ENCODE measurements at regions of chr11 and their contacts with region 1.

Region 1: DNA sequence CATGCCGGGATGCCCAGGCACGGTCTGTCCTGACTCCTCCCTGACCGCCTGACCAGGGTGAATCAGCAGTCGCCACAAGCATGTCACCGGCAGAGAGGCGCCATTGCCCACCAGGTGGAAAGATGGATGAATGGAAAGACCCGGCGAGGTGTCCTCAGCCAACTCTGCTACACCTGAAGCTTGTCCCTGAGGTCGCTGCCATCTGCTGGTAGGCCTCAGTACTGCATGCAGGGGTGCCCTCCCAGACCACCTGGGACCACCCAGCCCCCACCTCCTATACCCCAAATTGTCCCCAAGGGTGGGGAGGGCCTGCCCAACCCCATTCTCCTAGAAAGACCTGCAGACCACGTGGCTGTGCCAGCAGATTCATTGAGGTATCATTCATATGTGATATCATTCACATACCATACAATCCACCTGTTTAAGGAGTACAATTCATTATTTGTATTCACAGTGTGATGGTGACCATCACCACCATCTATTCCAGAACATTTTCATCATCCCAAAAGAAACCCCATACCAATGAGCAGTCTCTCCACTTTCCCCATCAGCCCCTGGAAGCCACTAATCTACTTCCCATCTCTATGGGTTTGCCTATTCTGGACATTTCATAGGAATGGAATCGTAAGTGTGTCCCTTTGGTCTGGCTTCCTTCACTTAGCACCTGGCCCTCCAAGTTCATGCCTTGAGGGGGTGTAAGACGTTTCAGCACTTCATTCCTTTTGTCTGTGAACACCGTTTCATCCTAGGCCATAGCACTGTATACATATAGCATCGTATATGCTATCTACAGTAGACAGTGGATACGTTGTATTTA is 17.5 kb downstream of the FGF3 start:
- DNase-seq: no peak
- H3K4me3 ChIP-seq: no peak overlapping the region
- H3K4me3 Mint-ChIP-seq: no peak overlapping the region
- H3K27ac ChIP-seq: no peak overlapping the region
- H3K27ac Mint-ChIP-seq: no peak overlapping the region
- H3K4me1 ChIP-seq: no peaks in the 10 kb centered on the region
- H3K4me1 Mint-ChIP-seq: no peaks in the 10 kb centered on the region
- H3K27me3 ChIP-seq: no peaks in the 10 kb centered on the region
- H3K27me3 Mint-ChIP-seq: peaks cover 2 to 3% (median 2%) of the 10 kb centered on the region in 3 donors
- CTCF ChIP-seq: peak; percentile 73

Region 2: DNA sequence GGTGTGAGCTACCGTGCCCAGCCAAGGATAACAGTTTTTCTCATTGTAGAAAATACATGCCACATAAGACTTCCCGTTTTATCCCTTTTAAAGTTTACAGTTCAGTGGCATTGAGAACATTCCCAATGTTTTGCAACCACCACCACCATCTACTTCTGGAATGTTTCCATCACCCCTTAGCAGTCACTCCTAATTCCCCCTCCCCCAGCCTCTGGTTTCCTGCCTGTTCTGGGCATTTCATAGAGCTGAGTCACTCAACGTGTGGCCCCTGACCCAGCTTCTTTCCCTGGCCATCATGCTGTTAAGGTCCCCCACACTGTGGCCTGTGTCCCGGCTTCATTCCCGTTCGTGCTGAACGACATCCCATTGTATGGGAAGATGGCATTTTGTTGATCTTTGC is 57.3 kb before region 1 on chr11:
- intact Hi-C with region 1: loop called in 1 of 2 experiments (anchors 10 kb)
- DNase-seq: no peak
- H3K4me3 ChIP-seq: no peak overlapping the region
- H3K4me3 Mint-ChIP-seq: no peak overlapping the region
- H3K27ac ChIP-seq: no peak overlapping the region
- H3K27ac Mint-ChIP-seq: no peak overlapping the region
- H3K4me1 ChIP-seq: no peaks in the 10 kb centered on the region
- H3K4me1 Mint-ChIP-seq: no peaks in the 10 kb centered on the region
- H3K27me3 ChIP-seq: no peaks in the 10 kb centered on the region
- H3K27me3 Mint-ChIP-seq: peaks cover 4 to 13% (median 6%) of the 10 kb centered on the region in 3 donors
- CTCF ChIP-seq: no peak

Region 3: GRCh38 chr11:69848201-69848600 is 46.5 kb after region 1 on chr11:
- intact Hi-C with region 1: no loop called
- DNase-seq: no peak
- H3K4me3 ChIP-seq: no peak overlapping the region
- H3K4me3 Mint-ChIP-seq: no peak overlapping the region
- H3K27ac ChIP-seq: no peak overlapping the region
- H3K27ac Mint-ChIP-seq: no peak overlapping the region
- H3K4me1 ChIP-seq: no peaks in the 10 kb centered on the region
- H3K4me1 Mint-ChIP-seq: no peaks in the 10 kb centered on the region
- H3K27me3 ChIP-seq: peaks cover 0 to 3% of the 10 kb centered on the region in 2 donors
- H3K27me3 Mint-ChIP-seq: peaks cover 2 to 12% (median 9%) of the 10 kb centered on the region in 3 donors
- CTCF ChIP-seq: no peak

Region 4: DNA sequence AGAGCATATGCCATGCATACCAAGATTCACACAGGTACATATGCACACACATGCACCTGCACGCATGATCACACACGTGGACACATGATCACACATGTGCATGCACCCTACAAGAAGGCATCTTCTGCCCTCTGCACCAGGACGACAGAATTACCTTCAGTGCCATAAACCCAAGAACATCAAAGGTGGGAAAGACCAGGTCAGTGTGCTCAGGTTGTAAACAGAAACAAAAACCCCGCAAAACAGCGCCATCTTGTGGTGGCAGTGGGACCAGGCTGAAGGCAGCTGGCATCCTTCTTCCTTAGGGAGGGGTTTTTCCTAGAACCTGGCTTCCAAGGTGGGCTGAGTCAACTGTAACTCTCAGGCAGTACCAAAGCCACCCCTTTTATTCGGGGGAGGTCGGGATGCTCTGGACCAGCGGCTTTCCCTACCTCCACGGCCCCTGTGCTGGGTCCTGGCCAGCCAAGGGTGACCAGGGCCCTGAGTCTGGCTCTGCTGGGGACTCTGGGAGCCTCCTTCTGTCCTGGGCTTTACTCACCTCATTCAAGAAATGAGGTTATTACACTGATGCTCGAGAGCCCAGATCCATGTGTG is 86.9 kb after region 1 on chr11:
- intact Hi-C with region 1: no loop called
- DNase-seq: peak; percentile 28 to 44 (median 33)
- H3K4me3 ChIP-seq: no peak overlapping the region
- H3K4me3 Mint-ChIP-seq: no peak overlapping the region
- H3K27ac ChIP-seq: no peak overlapping the region
- H3K27ac Mint-ChIP-seq: no peak overlapping the region
- H3K4me1 ChIP-seq: no peaks in the 10 kb centered on the region
- H3K4me1 Mint-ChIP-seq: no peaks in the 10 kb centered on the region
- H3K27me3 ChIP-seq: peaks cover 0 to 7% of the 10 kb centered on the region in 2 donors
- H3K27me3 Mint-ChIP-seq: peaks cover 18 to 42% (median 26%) of the 10 kb centered on the region in 3 donors
- CTCF ChIP-seq: peak; percentile 86